Dorsolateral prefrontal cortex (tissue), 120 donors: ENCODE measurements at regions of chr21 and their contacts with region 1.

Region 1: GRCh38 chr21:36989699-36990507 is 16.6 kb upstream of the RIPPLY3 start:
- DNase-seq: peak; percentile 73 to 94 (median 85)
- H3K4me3 ChIP-seq: peak overlapping the region; percentile 53 to 88 (median 71)
- H3K27ac ChIP-seq: peak overlapping the region; percentile 70 to 99 (median 95)
- H3K27me3 ChIP-seq: peaks cover 0 to 8% (median 0%) of the 10 kb centered on the region in 45 donors
- CTCF ChIP-seq: peak in 55 of 56 donors; percentile 40 to 98 (median 88)

Region 2: DNA sequence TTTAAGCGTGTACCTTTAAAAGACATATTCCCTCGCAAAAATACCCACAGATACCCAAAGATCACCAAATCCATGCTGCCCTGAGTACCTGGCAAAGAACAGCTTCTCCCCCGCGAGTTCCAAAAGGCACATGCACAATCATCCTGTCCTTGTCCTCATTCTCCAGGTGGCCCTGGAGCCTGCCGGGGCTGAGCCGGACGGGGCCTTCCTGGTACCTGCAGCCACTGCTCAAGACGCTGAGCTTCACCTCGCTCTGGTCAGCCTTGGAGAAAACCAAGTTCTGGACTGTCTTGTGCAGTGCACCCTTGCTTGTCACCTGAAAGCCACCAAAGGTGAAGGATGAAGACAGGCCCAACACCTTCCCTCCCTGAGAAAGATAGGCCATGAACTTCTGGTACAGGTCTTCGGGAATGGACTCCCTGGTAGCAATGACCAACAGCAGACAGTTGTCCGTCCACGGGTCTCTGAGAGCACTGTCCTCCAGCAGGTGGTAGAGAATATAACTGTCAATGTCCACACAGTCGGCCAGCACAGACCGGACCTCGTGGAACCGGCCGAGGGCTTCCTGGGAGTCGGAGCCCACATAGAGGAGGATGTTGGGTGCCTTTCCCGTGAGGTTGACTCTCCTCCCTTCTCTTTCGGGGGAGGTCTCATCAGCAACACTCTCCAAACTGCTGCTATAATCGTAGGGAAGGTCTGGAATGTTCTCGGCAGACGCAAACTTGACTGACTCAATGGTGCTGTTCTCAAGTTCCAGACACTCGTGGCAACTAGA is 53.4 kb before region 1 on chr21:
- intact Hi-C with region 1: loop called in 1 of 2 experiments (anchors 2 kb)
- DNase-seq: no peak
- H3K4me3 ChIP-seq: no peak overlapping the region
- H3K27ac ChIP-seq: no peak overlapping the region
- H3K27me3 ChIP-seq: no peaks in the 10 kb centered on the region
- CTCF ChIP-seq: no peak

Region 3: GRCh38 chr21:36966066-36966820 is 23.7 kb before region 1 on chr21 and contains the start of gene HLCS:
- intact Hi-C with region 1: loop called in 1 of 2 experiments (anchors 2 kb)
- DNase-seq: peak in 7 of 10 donors; percentile 14 to 67 (median 44)
- H3K4me3 ChIP-seq: peak within 1 kb of the TSS; percentile 57 to 89 (median 78)
- H3K27ac ChIP-seq: peak within 1 kb of the TSS; percentile 40 to 94 (median 85)
- H3K27me3 ChIP-seq: no peaks in the 10 kb centered on the region
- CTCF ChIP-seq: peak in 16 of 56 donors; percentile 4 to 38 (median 26)
- total RNA-seq, gene HLCS: 18.7 to 38.4 (median 25.9) TPM

Region 4: GRCh38 chr21:37009740-37010341 is 19.9 kb after region 1 on chr21:
- intact Hi-C with region 1: loop called in 1 of 2 experiments (anchors 1 kb)
- DNase-seq: peak; percentile 52 to 85 (median 68)
- H3K4me3 ChIP-seq: peak overlapping the region in 47 of 59 donors; percentile 1 to 60 (median 38)
- H3K27ac ChIP-seq: no peak overlapping the region
- H3K27me3 ChIP-seq: peaks cover 0 to 62% (median 38%) of the 10 kb centered on the region in 45 donors
- CTCF ChIP-seq: peak; percentile 47 to 89 (median 76)